ENCODE measurements at regions of chr11 and their contacts with region 1.

Region 1: GRCh38 chr11:62855571-62856332 is 16.4 kb upstream of the WDR74 start:
- DNase-seq: peak; percentile 99
- ATAC-seq: peak; percentile 85
- H3K4me3 Mint-ChIP-seq: peak overlapping the region; percentile 99
- H3K27ac Mint-ChIP-seq: peak overlapping the region; percentile 98
- H3K4me1 Mint-ChIP-seq: peaks cover 69% of the 10 kb centered on the region
- H3K27me3 Mint-ChIP-seq: no peaks in the 10 kb centered on the region

Region 2: GRCh38 chr11:62671575-62672389 is 184.0 kb before region 1 on chr11 and contains the starts of genes LBHD1 and UQCC3:
- CTCF ChIA-PET with region 1: no interaction called
- POLR2A ChIA-PET with region 1: interaction called, 21 read pairs
- DNase-seq: peak; percentile 81
- ATAC-seq: peak; percentile 85
- H3K4me3 Mint-ChIP-seq: peak within 1 kb of the TSS; percentile 99
- H3K27ac Mint-ChIP-seq: peak within 1 kb of the TSS; percentile 99
- H3K4me1 Mint-ChIP-seq: peaks cover 67% of the 10 kb centered on the region
- H3K27me3 Mint-ChIP-seq: no peaks in the 10 kb centered on the region
- total RNA-seq, gene LBHD1: 22.3 to 25.0 TPM
- total RNA-seq, gene UQCC3: 7.5 TPM

Region 3: DNA sequence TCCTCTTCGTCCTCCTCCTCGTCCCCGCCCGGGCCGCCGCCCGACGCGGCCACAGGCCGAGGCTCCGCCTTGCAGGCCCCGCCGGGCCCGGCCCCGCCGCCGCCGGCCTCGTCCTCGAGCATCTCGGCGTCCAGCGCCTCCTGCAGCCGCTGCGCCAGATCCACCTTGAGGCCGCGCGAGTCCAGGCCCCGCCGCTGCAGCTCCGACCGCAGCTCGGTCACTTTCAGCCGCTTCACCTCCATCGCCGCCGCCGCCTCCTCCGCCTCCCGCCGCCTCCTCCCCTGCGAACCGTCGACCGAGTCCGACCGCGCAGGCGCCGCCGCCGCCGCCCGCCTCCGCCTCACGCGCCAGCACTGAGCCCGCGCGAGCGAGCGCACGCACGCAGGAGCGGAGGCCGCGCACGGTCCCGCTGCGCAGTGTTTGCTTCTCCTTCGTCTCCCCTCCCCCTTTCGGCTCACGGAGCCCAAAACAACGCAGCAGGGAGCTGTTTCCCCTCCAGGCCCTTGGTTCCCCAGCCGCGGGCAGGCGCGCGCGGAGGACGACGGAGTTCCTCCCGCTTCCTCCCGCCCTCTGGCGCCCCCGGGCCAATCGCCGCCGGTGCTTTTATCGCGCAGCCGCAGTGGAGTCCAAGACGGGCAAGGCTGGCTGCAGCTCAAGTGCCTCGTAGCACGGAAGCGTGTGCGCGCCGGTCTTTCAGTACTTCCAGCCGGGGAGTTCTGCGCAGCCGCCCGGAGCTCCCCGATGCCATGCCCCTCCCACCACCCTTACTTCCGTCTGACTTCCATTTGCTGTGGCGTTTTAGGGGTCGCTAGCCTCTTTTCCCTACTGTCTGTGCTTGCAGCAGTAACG is 128.6 kb before region 1 on chr11 and contains the start of gene HNRNPUL2:
- CTCF ChIA-PET with region 1: interaction called, 4 read pairs
- POLR2A ChIA-PET with region 1: interaction called, 31 read pairs
- DNase-seq: peak; percentile 99
- ATAC-seq: peak; percentile 87
- H3K4me3 Mint-ChIP-seq: peak within 1 kb of the TSS; percentile 94
- H3K27ac Mint-ChIP-seq: peak within 1 kb of the TSS; percentile 96
- H3K4me1 Mint-ChIP-seq: peaks cover 47% of the 10 kb centered on the region
- H3K27me3 Mint-ChIP-seq: no peaks in the 10 kb centered on the region
- total RNA-seq, gene HNRNPUL2: 65.4 to 67.0 TPM

Region 4: GRCh38 chr11:62805076-62805892 is 50.5 kb before region 1 on chr11 and contains the start of gene NXF1:
- CTCF ChIA-PET with region 1: interaction called, 5 read pairs
- POLR2A ChIA-PET with region 1: interaction called, 25 read pairs
- DNase-seq: peak; percentile 95
- ATAC-seq: peak; percentile 81
- H3K4me3 Mint-ChIP-seq: peak within 1 kb of the TSS; percentile 99
- H3K27ac Mint-ChIP-seq: peak within 1 kb of the TSS; percentile 95
- H3K4me1 Mint-ChIP-seq: peaks cover 37% of the 10 kb centered on the region
- H3K27me3 Mint-ChIP-seq: no peaks in the 10 kb centered on the region
- total RNA-seq, gene NXF1: 110 to 111 TPM

Region 5: DNA sequence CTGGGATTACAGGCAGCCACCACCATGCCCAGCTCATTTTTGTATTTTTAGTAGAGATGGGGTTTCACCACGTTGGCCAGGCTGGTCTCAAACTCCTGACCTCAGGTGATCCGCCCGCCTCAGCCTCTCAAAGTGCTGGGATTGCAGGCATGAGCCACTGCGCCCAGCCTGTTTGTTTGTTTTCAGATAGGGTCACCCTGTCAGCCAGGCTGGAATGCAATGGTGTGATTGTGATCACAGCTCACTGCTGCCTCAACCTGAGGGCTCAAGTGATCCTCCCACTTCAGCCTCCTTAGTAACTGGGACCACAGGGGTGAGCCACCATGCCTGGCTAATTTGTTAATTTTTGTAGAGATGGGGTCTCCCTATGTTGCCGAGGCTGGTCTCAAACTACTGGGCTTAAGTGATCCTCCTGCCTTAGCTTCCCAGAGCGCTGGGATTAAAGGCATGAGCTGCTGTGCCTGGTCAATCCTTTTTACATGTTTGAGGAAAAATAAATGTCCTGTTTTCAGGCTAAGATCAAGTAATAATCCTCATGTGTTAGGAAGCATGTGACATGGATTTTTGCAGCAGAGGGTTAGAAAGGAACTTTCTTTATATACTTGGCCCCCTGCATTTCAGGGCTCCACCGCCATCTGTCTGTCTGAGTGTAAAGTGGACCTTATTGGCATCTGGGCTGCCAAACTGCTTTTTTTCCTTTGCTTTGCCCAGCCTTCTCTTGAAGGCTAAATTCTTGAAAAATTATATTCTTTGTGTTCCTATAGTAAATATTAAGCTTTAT is 20.1 kb after region 1 on chr11:
- CTCF ChIA-PET with region 1: interaction called, 20 read pairs
- POLR2A ChIA-PET with region 1: interaction called, 104 read pairs
- DNase-seq: no peak
- ATAC-seq: no peak
- H3K4me3 Mint-ChIP-seq: no peak overlapping the region
- H3K27ac Mint-ChIP-seq: no peak overlapping the region
- H3K4me1 Mint-ChIP-seq: peaks cover 17% of the 10 kb centered on the region
- H3K27me3 Mint-ChIP-seq: no peaks in the 10 kb centered on the region

Region 6: DNA sequence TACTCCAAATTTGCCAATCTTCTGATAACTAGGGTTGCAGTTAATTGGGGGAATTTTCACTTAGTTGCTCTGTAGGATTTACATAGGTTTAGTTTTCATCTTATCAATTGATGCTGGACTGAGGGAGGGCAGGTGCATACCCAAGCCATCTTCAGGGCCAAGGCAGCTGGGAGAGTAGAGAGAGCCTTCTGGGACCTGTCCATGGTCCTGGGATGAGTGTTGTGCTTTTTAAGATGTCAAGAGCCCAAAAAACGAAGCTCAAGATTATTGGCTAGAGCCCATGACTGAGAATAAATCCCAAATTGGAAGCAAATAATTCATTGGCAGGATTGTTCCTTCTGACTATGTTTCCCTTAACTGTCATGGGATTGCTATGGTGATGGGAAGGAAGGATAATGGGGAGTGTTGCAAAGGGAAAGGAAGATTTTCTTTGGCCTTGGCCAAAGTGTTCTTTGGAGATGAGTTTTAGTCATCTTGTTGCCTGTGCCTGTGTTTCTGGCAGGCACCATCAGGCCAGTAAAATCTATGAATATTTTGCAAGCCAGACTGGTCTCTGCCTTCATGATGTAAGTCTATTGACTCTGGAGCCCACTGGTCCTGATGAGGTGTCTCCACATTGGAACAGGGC is 124.5 kb after region 1 on chr11:
- CTCF ChIA-PET with region 1: no interaction called
- POLR2A ChIA-PET with region 1: no interaction called
- DNase-seq: no peak
- ATAC-seq: no peak
- H3K4me3 Mint-ChIP-seq: no peak overlapping the region
- H3K27ac Mint-ChIP-seq: no peak overlapping the region
- H3K4me1 Mint-ChIP-seq: no peaks in the 10 kb centered on the region
- H3K27me3 Mint-ChIP-seq: no peaks in the 10 kb centered on the region

Measured in activated CD8-positive, alpha-beta T cell treated with anti-CD3 and anti-CD28 coated beads, Interleukin-2, amount 10 ng/mL, durations not matched to agents 7 days and 5 days (primary cell).